Heart right ventricle (tissue), 16 donors: ENCODE measurements at regions of chr3 and their contacts with region 1.

Region 1: GRCh38 chr3:55500555-55501330 is 13.6 kb upstream of the WNT5A start:
- DNase-seq: no peak
- ATAC-seq: no peak
- H3K4me3 ChIP-seq: no peak overlapping the region
- H3K27ac ChIP-seq: no peak overlapping the region
- H3K4me1 ChIP-seq: no peaks in the 10 kb centered on the region
- H3K27me3 ChIP-seq: peaks cover 0 to 26% (median 0%) of the 10 kb centered on the region in 7 donors
- CTCF ChIP-seq: no peak

Region 2: DNA sequence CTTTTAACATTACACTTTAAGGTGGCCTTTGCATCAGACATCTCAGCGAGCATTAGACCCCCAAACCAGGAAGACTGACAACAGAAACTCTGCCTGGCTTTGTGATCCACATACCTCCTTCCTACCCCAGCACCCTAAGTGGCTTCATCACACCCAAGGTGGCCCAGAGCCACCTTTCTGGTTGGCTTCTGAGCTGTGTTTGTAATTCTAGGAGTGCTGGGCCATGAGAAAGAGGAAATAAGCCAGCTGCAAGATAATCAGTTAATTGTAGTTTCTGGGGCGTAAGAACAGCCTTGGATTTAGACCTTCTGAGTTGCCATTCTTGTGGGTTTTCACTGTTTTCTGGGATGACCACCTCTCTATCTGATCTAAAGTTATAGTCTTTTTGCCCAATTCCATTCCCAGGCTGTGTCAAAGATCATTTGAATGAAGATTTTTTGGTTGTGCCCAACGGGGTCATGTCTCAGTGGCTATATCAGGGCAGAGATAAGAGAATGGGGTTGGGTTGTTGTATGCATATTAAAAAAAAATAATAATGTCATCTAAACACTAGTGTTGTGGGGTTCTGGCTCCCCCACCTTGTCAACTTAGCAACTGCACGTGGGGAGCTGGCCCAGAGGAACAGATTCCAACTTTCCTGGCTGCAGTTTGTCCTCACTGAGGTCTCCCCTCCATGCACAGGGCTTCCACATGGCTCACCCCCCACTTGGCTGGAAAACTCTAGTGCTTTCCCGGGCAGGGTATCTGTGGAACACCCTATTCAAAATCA is 221.2 kb after region 1 on chr3:
- intact Hi-C with region 1: loop called in 1 of 10 experiments (anchors 10 kb)
- DNase-seq: peak in 1 of 2 donors; percentile 12
- ATAC-seq: peak in 2 of 8 donors; percentile 17 to 52
- H3K4me3 ChIP-seq: no peak overlapping the region
- H3K27ac ChIP-seq: no peak overlapping the region
- H3K4me1 ChIP-seq: peaks cover 0 to 7% (median 0%) of the 10 kb centered on the region in 9 donors
- H3K27me3 ChIP-seq: peaks cover 0 to 41% (median 11%) of the 10 kb centered on the region in 7 donors
- CTCF ChIP-seq: peak in 7 of 9 donors; percentile 33 to 57 (median 48)

Region 3: GRCh38 chr3:55780913-55781312 is 280.2 kb after region 1 on chr3:
- intact Hi-C with region 1: no loop called
- DNase-seq: no peak
- ATAC-seq: no peak
- H3K4me3 ChIP-seq: no peak overlapping the region
- H3K27ac ChIP-seq: no peak overlapping the region
- H3K4me1 ChIP-seq: no peaks in the 10 kb centered on the region
- H3K27me3 ChIP-seq: peaks cover 0 to 29% (median 0%) of the 10 kb centered on the region in 7 donors
- CTCF ChIP-seq: no peak